Panc1 (cell line): ENCODE measurements at regions of chr11 and their contacts with region 1.

Region 1: GRCh38 chr11:77865805-77866204 is 44.9 kb downstream of the AAMDC start:
- DNase-seq: no peak
- ATAC-seq: no peak
- H3K4me3 ChIP-seq: no peak overlapping the region
- H3K27ac ChIP-seq: no peak overlapping the region
- H3K4me1 ChIP-seq: no peaks in the 10 kb centered on the region
- H3K27me3 ChIP-seq: no peaks in the 10 kb centered on the region
- CTCF ChIP-seq: no peak

Region 2: DNA sequence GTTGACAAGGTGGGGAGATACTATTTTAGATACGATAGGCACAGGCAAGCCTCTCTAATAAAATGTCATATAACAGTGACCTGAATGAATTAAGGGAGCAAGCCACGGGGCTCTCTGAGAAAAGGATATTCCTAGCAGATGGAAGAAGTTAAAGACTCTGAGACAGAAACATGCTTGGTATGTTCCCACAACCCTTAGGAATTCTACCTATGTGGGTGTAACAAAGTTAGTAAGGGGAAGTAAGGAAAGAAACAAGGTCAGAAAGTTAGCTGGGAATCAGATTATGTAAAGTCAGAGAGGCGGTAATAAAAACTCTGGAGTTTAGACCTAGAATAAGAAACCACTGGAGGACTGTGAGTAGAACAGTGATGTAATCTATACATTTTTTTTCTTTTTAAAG is 504.6 kb before region 1 on chr11:
- CTCF ChIA-PET with region 1: no interaction called
- POLR2A ChIA-PET with region 1: interaction called, 10 read pairs
- in situ Hi-C with region 1: no loop called
- intact Hi-C with region 1: no loop called
- DNase-seq: no peak
- ATAC-seq: no peak
- H3K4me3 ChIP-seq: no peak overlapping the region
- H3K27ac ChIP-seq: no peak overlapping the region
- H3K4me1 ChIP-seq: no peaks in the 10 kb centered on the region
- H3K27me3 ChIP-seq: no peaks in the 10 kb centered on the region
- CTCF ChIP-seq: no peak

Region 3: GRCh38 chr11:78045851-78046485 is 180.2 kb after region 1 on chr11:
- CTCF ChIA-PET with region 1: no interaction called
- POLR2A ChIA-PET with region 1: interaction called, 12 read pairs
- in situ Hi-C with region 1: no loop called
- intact Hi-C with region 1: no loop called
- DNase-seq: no peak
- ATAC-seq: peak; percentile 96
- H3K4me3 ChIP-seq: peak overlapping the region; percentile 41 to 73
- H3K27ac ChIP-seq: peak overlapping the region; percentile 79; the same call in 1 of the 2 replicates
- H3K4me1 ChIP-seq: peaks cover 5% of the 10 kb centered on the region; the same call in 1 of the 2 replicates
- H3K27me3 ChIP-seq: no peaks in the 10 kb centered on the region
- CTCF ChIP-seq: peak; percentile 100